Activated CD8-positive, alpha-beta memory T cell treated with anti-CD3 and anti-CD28 coated beads, Interleukin-2, amount 10 ng/mL, durations not matched to agents 7 days and 5 days (primary cell): ENCODE measurements at regions of chr1 and their contacts with region 1.

Region 1: DNA sequence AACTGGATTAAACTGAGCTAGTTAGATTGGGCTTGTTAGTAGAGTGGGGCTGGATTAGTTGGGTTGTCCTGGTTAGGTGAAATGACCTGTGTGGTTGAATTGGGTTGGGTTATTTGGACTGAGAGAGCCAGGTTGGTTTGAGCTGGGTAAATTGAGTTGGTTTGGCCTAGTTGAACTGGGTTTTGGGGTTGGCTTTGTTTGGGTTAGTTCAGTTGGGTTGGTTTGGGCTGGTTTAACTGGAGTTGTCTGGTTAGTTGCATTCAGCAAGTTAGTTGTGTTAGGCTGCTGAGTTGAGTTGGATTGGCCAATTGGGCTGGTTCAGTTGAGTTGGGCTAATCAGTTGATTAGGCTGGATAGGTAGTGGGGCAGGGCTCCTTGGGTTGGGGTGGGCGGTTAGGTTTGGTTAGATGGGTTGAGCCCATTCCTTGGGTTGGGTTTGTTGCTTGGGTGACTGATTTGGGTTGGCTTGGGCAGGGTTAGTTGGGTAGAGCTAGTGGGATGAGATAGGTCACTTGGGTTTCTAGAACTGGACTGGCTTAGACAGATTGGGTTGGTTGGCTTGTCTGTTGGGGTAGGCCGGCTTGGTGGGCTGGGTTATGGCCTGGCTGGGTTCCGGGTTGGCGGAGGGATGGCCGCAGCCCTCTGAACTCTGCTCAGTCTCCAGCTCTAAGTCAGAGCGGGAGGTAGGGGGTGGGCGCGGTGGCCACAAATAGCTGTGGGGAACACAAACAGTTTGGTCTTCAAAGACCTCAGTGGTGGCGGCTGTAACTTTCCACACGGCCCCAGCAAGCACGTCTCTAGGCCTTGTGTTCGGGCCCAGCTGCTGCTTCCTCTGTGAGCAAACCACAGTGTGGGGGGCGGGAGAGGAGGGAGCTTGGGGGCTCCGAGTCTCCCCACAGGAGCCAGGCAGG is 67.2 kb upstream of the RUNX3 start:
- DNase-seq: peak; percentile 96
- ATAC-seq: peak; percentile 68
- H3K4me3 Mint-ChIP-seq: peak overlapping the region; percentile 28
- H3K27ac Mint-ChIP-seq: peak overlapping the region; percentile 96
- H3K4me1 Mint-ChIP-seq: peaks cover 92% of the 10 kb centered on the region
- H3K27me3 Mint-ChIP-seq: no peaks in the 10 kb centered on the region

Region 2: DNA sequence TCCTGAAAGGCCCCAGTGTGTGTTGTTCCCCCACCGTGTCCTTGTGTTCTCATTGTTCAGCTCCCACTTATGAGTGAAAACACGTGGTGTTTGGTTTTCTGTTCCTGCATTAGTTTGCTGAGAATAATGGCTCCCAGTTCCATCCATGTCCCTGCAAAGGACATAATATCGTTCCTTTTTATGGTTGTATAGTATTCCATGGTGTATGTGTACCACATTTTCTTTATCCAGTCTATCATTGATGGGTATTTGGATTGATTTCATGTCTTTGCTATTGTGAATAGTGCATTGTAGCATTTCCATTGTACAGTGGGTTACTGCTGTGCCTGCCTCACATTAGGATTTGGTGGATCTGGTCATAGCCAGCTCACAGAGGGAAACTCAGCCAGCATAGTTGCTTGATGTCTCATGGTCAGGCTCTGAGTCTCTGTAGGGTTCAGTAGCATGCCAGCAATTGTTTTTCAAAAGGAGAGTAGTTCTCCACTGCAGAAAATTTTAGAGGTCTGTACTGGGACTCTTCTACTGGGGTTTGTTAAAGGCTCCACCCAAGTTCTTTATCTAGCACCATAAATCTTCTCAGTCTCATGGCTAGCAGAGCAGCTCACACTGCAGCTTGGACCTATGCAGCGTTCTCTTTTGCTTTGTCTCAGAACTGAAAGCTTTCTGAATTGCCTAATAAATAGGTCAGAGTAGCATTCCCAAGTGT is 108.1 kb before region 1 on chr1:
- CTCF ChIA-PET with region 1: no interaction called
- DNase-seq: no peak
- ATAC-seq: no peak
- H3K4me3 Mint-ChIP-seq: no peak overlapping the region
- H3K27ac Mint-ChIP-seq: no peak overlapping the region
- H3K4me1 Mint-ChIP-seq: no peaks in the 10 kb centered on the region
- H3K27me3 Mint-ChIP-seq: peaks cover 21% of the 10 kb centered on the region

Region 3: GRCh38 chr1:24964811-24965570 is 32.2 kb before region 1 on chr1:
- CTCF ChIA-PET with region 1: interaction called, 108 read pairs
- DNase-seq: peak; percentile 99
- ATAC-seq: peak; percentile 70
- H3K4me3 Mint-ChIP-seq: peak overlapping the region; percentile 89
- H3K27ac Mint-ChIP-seq: peak overlapping the region; percentile 92
- H3K4me1 Mint-ChIP-seq: peaks cover 56% of the 10 kb centered on the region
- H3K27me3 Mint-ChIP-seq: no peaks in the 10 kb centered on the region

Region 4: GRCh38 chr1:24981631-24982005 is 15.6 kb before region 1 on chr1:
- CTCF ChIA-PET with region 1: interaction called, 43 read pairs
- DNase-seq: no peak
- ATAC-seq: peak; percentile 21
- H3K4me3 Mint-ChIP-seq: peak overlapping the region; percentile 8
- H3K27ac Mint-ChIP-seq: peak overlapping the region; percentile 71
- H3K4me1 Mint-ChIP-seq: peaks cover 86% of the 10 kb centered on the region
- H3K27me3 Mint-ChIP-seq: no peaks in the 10 kb centered on the region

Region 5: DNA sequence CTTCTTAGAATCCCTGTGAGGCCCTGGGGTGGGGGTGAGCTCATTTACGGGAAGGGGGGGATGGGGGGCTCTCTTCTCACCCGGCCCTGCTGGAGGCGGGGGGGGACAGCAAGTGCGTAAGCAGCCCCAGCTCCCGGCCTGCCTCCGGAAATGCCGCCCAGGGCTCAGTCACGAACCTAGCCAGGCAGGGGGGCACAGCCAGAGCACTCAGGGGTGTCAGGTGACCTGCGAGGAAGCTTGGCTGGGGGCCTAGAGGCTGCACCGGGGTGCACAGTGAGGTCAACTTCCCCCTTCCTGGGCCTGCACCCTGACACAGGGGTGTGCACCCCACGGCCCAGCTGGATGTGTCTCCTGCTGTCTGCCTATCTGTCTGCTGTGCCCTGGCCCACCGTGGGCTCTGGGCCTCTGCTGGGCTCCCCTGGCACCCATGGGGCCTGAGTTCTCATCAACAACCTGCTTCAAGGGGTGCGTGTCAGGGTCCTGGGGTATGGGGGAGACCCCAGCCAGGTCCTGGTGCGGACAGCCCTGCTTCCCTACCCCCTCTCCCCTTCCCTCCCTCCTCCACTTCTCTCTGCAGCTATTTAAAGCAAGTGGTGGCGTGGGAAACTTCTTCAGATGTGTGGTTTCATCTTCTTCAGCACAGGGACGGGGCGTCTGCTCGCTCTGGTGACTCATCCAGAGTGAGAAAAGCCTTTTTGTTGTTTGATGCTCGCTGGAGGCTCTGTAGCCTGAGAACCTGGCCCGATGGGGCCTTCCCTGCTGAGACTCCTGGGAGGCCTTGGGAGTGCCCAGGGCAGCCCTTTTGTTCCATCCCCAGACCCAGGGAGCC is 25.3 kb after region 1 on chr1:
- CTCF ChIA-PET with region 1: interaction called, 30 read pairs
- DNase-seq: peak; percentile 99
- ATAC-seq: peak; percentile 90
- H3K4me3 Mint-ChIP-seq: peak overlapping the region; percentile 71
- H3K27ac Mint-ChIP-seq: peak overlapping the region; percentile 97
- H3K4me1 Mint-ChIP-seq: peaks cover 80% of the 10 kb centered on the region
- H3K27me3 Mint-ChIP-seq: no peaks in the 10 kb centered on the region

Region 6: GRCh38 chr1:25031966-25032667 is 34.9 kb after region 1 on chr1:
- CTCF ChIA-PET with region 1: interaction called, 26 read pairs
- DNase-seq: peak; percentile 85
- ATAC-seq: peak; percentile 27
- H3K4me3 Mint-ChIP-seq: peak overlapping the region; percentile 52
- H3K27ac Mint-ChIP-seq: no peak overlapping the region
- H3K4me1 Mint-ChIP-seq: peaks cover 4% of the 10 kb centered on the region
- H3K27me3 Mint-ChIP-seq: no peaks in the 10 kb centered on the region